Ascending aorta (tissue), 2 donors: ENCODE measurements at regions of chr18 and their contacts with region 1.

Region 1: DNA sequence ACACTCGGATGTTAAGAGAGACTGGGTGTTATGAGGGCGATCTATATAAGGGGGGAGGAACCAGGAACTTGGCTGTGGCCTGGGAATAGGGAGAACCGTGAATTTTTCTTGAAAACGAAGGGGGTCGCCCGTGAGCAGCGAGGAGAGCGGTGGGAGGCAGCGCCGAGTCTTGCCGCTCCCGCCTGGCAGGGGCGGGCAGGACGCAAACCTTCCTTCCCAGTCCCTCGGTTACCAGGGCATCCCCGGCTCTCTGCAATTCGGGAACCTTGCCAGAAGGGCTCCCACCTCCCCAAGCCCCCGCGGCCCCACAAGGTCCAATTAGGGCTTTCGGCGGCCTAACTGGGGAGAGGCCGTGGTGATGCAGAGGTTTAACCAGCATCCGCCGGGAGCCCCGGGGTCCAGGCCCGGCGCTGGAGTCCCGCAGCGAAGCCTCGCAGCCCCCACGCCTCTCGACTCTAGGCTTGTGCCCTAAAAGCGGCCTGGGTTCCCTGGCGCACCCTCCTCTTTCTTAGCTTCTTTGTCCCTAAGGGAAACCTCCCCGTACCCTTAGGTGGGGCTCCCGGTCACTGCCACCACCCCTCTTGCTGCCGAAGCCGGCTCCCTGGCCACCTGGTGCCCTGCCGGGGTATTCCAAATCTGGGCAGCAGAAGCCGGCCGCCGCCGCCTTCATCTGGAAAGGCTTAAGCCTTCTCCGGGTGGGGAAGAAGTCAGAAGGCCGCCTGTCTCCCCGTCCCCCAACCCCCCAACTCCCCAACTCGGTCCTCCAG is 680 bp upstream of the FHOD3 start:
- DNase-seq: peak in 1 of 2 donors; percentile 83
- H3K4me3 ChIP-seq: peak overlapping the region; percentile 91 to 99
- H3K27ac ChIP-seq: peak overlapping the region; percentile 77 to 84
- H3K4me1 ChIP-seq: peaks cover 2 to 5% of the 10 kb centered on the region in 2 donors
- H3K27me3 ChIP-seq: no peaks in the 10 kb centered on the region
- CTCF ChIP-seq: peak in 2 of 3 experiments; percentile 53 to 66

Region 2: GRCh38 chr18:36247036-36247435 is 49.8 kb before region 1 on chr18:
- intact Hi-C with region 1: no loop called
- DNase-seq: no peak
- H3K4me3 ChIP-seq: no peak overlapping the region
- H3K27ac ChIP-seq: no peak overlapping the region
- H3K4me1 ChIP-seq: no peaks in the 10 kb centered on the region
- H3K27me3 ChIP-seq: no peaks in the 10 kb centered on the region
- CTCF ChIP-seq: no peak

Region 3: DNA sequence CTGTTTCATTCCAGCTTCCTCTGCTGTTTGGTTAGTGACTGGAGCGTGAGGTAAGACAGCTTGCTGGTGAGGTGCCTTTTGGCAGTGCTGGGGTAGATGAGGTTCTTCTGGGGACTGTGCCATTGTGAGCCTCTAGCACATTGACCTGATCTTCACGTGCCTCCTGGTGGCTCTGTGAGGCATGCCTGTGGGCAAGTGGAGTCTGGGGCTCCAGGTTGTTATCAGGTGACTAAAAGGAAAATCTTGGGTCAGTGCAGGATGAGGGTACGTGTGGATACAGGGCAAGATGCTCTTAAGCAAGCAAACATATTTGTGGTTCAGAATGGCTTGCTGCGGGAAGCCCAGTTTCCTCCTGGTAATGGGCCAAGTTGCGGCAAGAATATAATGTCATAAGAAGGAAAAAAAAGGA is 76.1 kb after region 1 on chr18:
- intact Hi-C with region 1: loop called (anchors 5 kb)
- DNase-seq: peak in 1 of 2 donors; percentile 69
- H3K4me3 ChIP-seq: peak overlapping the region in 1 of 2 donors; percentile 28
- H3K27ac ChIP-seq: peak overlapping the region; percentile 57 to 65
- H3K4me1 ChIP-seq: peaks cover 5 to 37% of the 10 kb centered on the region in 2 donors
- H3K27me3 ChIP-seq: no peaks in the 10 kb centered on the region
- CTCF ChIP-seq: peak in 2 of 3 experiments; percentile 27 to 44

Region 4: GRCh38 chr18:36441426-36442240 is 144.8 kb after region 1 on chr18:
- intact Hi-C with region 1: loop called (anchors 5 kb)
- DNase-seq: no peak
- H3K4me3 ChIP-seq: peak overlapping the region; percentile 2 to 27
- H3K27ac ChIP-seq: peak overlapping the region; percentile 78 to 85
- H3K4me1 ChIP-seq: peaks cover 23 to 52% of the 10 kb centered on the region in 2 donors
- H3K27me3 ChIP-seq: no peaks in the 10 kb centered on the region
- CTCF ChIP-seq: no peak

Region 5: GRCh38 chr18:36572135-36572856 is 275.5 kb after region 1 on chr18:
- intact Hi-C with region 1: loop called (anchors 1 kb)
- DNase-seq: peak in 1 of 2 donors; percentile 76
- H3K4me3 ChIP-seq: no peak overlapping the region
- H3K27ac ChIP-seq: peak overlapping the region; percentile 13 to 54
- H3K4me1 ChIP-seq: no peaks in the 10 kb centered on the region
- H3K27me3 ChIP-seq: no peaks in the 10 kb centered on the region
- CTCF ChIP-seq: peak; percentile 38 to 80 (median 52)

Region 6: GRCh38 chr18:36809590-36810381 is 513.0 kb after region 1 on chr18:
- intact Hi-C with region 1: loop called (anchors 5 kb)
- DNase-seq: no peak
- H3K4me3 ChIP-seq: no peak overlapping the region
- H3K27ac ChIP-seq: no peak overlapping the region
- H3K4me1 ChIP-seq: no peaks in the 10 kb centered on the region
- H3K27me3 ChIP-seq: no peaks in the 10 kb centered on the region
- CTCF ChIP-seq: peak; percentile 66 to 83 (median 68)